ENCODE measurements at regions of chr1 and their contacts with region 1.

Region 1: GRCh38 chr1:24391882-24392603 is 21.5 kb downstream of the STPG1 start:
- DNase-seq: peak in 2 of 3 donors; percentile 57 to 79
- ATAC-seq: peak; percentile 77 to 87 (median 81)
- H3K4me3 ChIP-seq: peak overlapping the region in 1 of 3 donors; percentile 3
- H3K27ac ChIP-seq: peak overlapping the region; percentile 30 to 54 (median 46)
- H3K4me1 ChIP-seq: peaks cover 0 to 44% (median 20%) of the 10 kb centered on the region in 4 donors
- H3K27me3 ChIP-seq: no peaks in the 10 kb centered on the region
- CTCF ChIP-seq: peak; percentile 73 to 84 (median 80)
- POLR2A ChIP-seq: no peak

Region 2: DNA sequence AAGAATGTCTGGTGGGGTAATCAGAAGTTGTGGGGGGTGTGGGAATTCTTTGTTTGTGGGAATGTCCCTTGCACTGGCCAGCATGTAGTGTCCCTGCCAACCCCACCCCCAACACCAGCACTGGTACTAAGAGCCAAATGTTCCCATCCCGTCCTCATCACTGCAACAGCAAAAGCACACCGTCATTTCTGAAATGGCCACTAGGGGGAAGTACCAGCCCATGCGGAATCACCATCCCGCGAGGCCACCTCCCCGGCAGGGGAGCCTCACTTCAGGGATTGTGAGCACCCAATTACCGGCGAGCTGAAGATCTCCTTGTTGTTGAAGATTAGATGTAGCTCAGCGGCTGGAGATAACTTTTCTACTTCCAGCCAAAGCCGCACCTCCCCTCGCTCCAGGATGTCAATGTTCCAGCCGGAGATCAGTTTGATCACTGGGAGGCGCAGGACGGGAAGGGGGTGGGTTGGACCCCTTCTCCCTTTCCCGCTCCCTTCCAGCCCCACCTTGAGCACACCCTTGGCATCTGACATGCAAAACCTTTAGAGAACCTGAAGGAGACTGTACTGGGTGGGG is 321.1 kb before region 1 on chr1:
- intact Hi-C with region 1: loop called in 1 of 2 experiments (anchors 10 kb)
- DNase-seq: peak; percentile 62 to 80 (median 68)
- ATAC-seq: peak; percentile 96 to 99 (median 98)
- H3K4me3 ChIP-seq: no peak overlapping the region
- H3K27ac ChIP-seq: no peak overlapping the region
- H3K4me1 ChIP-seq: no peaks in the 10 kb centered on the region
- H3K27me3 ChIP-seq: no peaks in the 10 kb centered on the region
- CTCF ChIP-seq: peak; percentile 82 to 89 (median 86)
- POLR2A ChIP-seq: no peak

Region 3: DNA sequence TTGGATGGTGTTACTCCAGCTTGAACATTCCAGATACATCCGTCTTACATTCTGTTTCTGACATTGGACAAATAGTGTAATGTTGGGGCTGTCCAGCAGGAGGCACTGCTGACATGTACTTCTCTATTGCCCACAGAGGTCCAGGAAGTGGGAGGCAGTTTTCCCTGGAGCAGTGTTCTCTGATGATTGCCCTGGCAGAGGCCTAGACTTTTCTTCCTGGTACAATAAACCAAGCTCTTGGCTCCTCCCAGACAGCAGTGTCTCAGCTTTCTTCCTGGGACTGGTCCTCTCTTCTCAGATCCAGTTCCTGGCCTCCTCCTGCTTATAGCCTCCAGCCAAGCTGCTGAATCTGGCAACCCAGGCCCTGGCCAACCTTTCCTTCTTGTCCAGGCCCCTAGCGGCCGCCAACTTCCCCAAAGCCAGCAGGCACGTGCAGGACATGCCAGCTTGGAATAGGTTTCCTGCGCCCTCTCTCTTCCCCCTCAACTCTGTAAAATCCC is 190.1 kb before region 1 on chr1:
- intact Hi-C with region 1: loop called (anchors 5 kb)
- DNase-seq: peak; percentile 72 to 85 (median 72)
- ATAC-seq: peak; percentile 88 to 93 (median 90)
- H3K4me3 ChIP-seq: no peak overlapping the region
- H3K27ac ChIP-seq: no peak overlapping the region
- H3K4me1 ChIP-seq: peaks cover 0 to 14% (median 0%) of the 10 kb centered on the region in 4 donors
- H3K27me3 ChIP-seq: no peaks in the 10 kb centered on the region
- CTCF ChIP-seq: peak; percentile 71 to 95 (median 82)
- POLR2A ChIP-seq: no peak

Region 4: GRCh38 chr1:24301785-24302175 is 90.3 kb before region 1 on chr1:
- intact Hi-C with region 1: no loop called
- DNase-seq: no peak
- ATAC-seq: no peak
- H3K4me3 ChIP-seq: no peak overlapping the region
- H3K27ac ChIP-seq: no peak overlapping the region
- H3K4me1 ChIP-seq: no peaks in the 10 kb centered on the region
- H3K27me3 ChIP-seq: no peaks in the 10 kb centered on the region
- CTCF ChIP-seq: no peak
- POLR2A ChIP-seq: no peak

Region 5: DNA sequence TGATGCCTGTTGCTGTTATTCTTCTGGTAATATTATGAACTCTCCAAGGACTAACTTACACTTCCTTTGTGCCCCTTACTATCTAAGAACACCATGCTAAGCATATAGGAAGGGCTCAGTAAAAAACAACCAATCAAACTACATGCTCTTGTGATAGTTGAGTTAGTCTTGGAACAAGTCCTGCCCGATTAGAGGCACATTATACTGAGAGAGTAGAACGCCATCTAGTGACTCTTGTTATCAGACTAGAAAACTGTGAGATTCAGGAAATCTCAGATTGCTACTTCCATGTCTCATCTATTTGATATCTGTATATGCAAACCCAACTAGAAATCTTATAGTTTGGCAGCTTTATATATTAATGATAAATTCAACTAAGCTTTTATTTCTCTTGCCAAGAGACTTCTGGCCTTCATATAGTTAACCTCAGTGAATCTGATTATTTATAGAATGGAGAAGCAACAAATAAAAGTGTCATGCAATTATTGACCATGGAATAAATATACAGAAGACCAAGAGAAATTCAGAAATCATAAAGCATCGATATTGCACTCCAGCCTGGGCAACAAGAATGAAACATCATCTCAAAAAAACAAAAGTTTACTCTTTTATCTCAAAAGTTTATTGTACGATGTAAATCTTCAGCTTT is 243.3 kb after region 1 on chr1:
- intact Hi-C with region 1: no loop called
- DNase-seq: no peak
- ATAC-seq: peak; percentile 86 to 91 (median 88)
- H3K4me3 ChIP-seq: no peak overlapping the region
- H3K27ac ChIP-seq: no peak overlapping the region
- H3K4me1 ChIP-seq: peaks cover 0 to 4% (median 0%) of the 10 kb centered on the region in 4 donors
- H3K27me3 ChIP-seq: no peaks in the 10 kb centered on the region
- CTCF ChIP-seq: peak; percentile 59 to 72 (median 64)
- POLR2A ChIP-seq: no peak

Measured in right lobe of liver (tissue), 6 donors.